ENCODE measurements at regions of chr15 and their contacts with region 1.

Region 1: GRCh38 chr15:67743558-67743957 is 81.8 kb upstream of the SKOR1 start:
- DNase-seq: no peak
- ATAC-seq: no peak
- H3K4me3 ChIP-seq: no peak overlapping the region
- H3K27ac ChIP-seq: no peak overlapping the region
- H3K4me1 ChIP-seq: peaks cover 11% of the 10 kb centered on the region; the same call in 2 of the 3 replicates
- CTCF ChIP-seq: no peak
- EP300 ChIP-seq: no peak
- POLR2A ChIP-seq: no peak
- RAD21 ChIP-seq: no peak

Region 2: GRCh38 chr15:67755264-67755663 is 11.7 kb after region 1 on chr15:
- CTCF ChIA-PET with region 1: interaction called, 11 read pairs
- POLR2A ChIA-PET with region 1: no interaction called
- DNase-seq: no peak
- ATAC-seq: no peak
- H3K4me3 ChIP-seq: no peak overlapping the region
- H3K27ac ChIP-seq: no peak overlapping the region
- H3K4me1 ChIP-seq: no peaks in the 10 kb centered on the region
- CTCF ChIP-seq: no peak
- EP300 ChIP-seq: no peak
- POLR2A ChIP-seq: no peak
- RAD21 ChIP-seq: no peak